Right ventricle myocardium inferior (tissue), 1 donor: ENCODE measurements at regions of chr5 and their contacts with region 1.

Region 1: GRCh38 chr5:61933787-61934626 is 372.0 kb upstream of the KIF2A start:
- DNase-seq: no peak
- ATAC-seq: no peak

Region 2: GRCh38 chr5:60677844-60678664 is 1256.0 kb before region 1 on chr5:
- intact Hi-C with region 1: loop called (anchors 5 kb)
- DNase-seq: no peak
- ATAC-seq: no peak

Region 3: GRCh38 chr5:61534481-61535267 is 399.3 kb before region 1 on chr5:
- intact Hi-C with region 1: no loop called
- DNase-seq: no peak
- ATAC-seq: no peak